Endothelial cell of umbilical vein (primary cell): ENCODE measurements at regions of chr14 and their contacts with region 1.

Region 1: DNA sequence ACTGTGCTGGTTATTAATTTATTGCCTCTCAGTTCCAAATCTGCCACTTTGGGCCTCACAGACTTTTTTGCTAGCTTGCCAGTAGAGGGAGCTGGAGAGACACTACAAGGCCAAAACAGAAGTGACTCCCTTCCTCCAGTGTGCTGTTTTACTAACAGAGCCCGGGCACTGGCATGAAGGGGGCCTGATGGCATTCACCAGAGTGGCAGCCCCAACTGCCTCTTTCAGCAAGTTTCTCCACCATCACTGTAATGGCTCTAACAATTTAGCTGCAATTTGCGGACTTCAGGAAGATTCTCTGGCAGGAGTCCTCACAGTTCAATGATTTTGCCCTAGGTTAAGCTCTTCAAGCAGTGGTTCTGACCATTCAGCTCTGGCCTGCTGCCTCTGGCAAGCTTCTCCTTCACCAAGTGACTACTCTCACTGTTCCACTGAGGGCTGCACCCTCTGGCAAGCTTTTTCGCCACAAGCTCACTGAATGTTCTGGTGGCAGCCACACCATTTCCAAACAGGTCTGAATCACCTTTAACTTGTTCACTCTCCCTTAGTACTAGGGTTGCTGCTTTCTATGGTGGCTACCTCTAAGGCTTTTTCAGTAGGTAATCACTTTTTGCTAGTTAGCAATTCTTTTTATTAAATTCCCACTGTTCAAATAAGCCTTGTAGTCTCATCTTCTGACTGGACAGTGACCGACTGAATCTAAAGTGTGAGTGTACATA is 104.9 kb downstream of the ZC3H14 start:
- DNase-seq: peak; percentile 64
- H3K4me3 ChIP-seq: no peak overlapping the region
- H3K27ac ChIP-seq: no peak overlapping the region
- H3K4me1 ChIP-seq: no peaks in the 10 kb centered on the region
- H3K27me3 ChIP-seq: peaks cover 0 to 3% of the 10 kb centered on the region in 2 experiments
- CTCF ChIP-seq: peak; percentile 79 to 84
- POLR2A ChIP-seq: no peak

Region 2: DNA sequence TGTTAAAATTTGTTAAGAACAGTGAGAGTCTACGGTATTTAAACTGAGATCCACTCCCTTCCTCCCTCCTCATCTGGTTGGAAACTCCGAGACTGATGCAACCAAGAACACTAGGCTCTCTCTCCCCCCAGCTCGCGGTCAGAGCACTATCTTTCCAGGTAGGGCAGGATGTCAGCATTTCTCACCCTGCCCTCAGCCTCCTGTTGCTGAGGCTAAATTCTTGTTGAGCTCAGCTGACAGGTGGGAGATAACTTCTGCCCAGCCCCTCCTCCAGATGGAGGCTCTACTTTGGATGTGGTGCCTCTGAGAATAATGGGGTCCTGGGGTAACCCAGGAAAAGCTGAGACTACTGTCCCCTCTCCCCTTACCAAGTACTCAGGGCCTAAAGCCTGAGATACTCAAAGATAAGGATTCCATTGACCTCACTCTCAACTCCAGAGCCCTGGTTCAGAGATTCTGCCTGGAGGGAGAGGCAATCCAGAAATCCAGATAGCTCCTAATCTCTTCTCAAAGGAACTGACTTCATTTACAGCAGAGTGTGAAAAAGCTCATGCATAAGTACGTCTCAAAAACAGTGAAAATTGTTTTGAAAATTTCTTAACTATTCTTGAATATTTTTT is 14.9 kb after region 1 on chr14:
- CTCF ChIA-PET with region 1: interaction called, 64 read pairs
- POLR2A ChIA-PET with region 1: no interaction called
- dilution Hi-C with region 1: no loop called
- intact Hi-C with region 1: no loop called
- DNase-seq: no peak
- H3K4me3 ChIP-seq: no peak overlapping the region
- H3K27ac ChIP-seq: no peak overlapping the region
- H3K4me1 ChIP-seq: no peaks in the 10 kb centered on the region
- H3K27me3 ChIP-seq: no peaks in the 10 kb centered on the region
- CTCF ChIP-seq: no peak
- POLR2A ChIP-seq: no peak

Region 3: GRCh38 chr14:88868558-88869159 is 200.9 kb after region 1 on chr14:
- CTCF ChIA-PET with region 1: interaction called, 24 read pairs
- POLR2A ChIA-PET with region 1: no interaction called
- dilution Hi-C with region 1: no loop called
- intact Hi-C with region 1: loop called (anchors 1 kb)
- DNase-seq: peak; percentile 32
- H3K4me3 ChIP-seq: no peak overlapping the region
- H3K27ac ChIP-seq: no peak overlapping the region
- H3K4me1 ChIP-seq: no peaks in the 10 kb centered on the region
- H3K27me3 ChIP-seq: no peaks in the 10 kb centered on the region
- CTCF ChIP-seq: no peak
- POLR2A ChIP-seq: no peak

Region 4: DNA sequence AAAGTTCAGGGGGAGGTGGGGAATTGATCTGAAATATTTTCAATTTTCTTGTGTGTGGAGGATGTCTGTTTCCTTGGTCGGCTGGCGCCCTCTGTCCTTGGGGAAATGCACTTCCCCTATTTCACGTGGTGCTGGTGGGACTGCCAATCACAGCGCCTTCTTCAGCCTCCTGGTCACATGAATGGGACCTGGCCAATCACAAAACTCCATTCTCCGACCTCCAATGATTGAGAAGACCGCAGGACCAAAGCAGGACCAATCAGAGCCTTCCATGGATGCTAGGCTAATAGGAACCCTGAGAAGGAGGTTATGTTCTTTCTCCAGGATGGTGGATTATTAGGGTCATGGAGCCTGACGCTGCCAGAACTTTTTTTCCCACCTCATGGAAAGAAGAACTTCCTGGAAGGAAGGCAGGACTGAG is 345.4 kb after region 1 on chr14:
- CTCF ChIA-PET with region 1: interaction called, 13 read pairs
- POLR2A ChIA-PET with region 1: no interaction called
- dilution Hi-C with region 1: no loop called
- intact Hi-C with region 1: loop called (anchors 1 kb)
- DNase-seq: peak; percentile 6
- H3K4me3 ChIP-seq: no peak overlapping the region
- H3K27ac ChIP-seq: no peak overlapping the region
- H3K4me1 ChIP-seq: no peaks in the 10 kb centered on the region
- H3K27me3 ChIP-seq: peaks cover 0 to 2% of the 10 kb centered on the region in 2 experiments
- CTCF ChIP-seq: peak in 1 of 2 donors; percentile 2
- POLR2A ChIP-seq: no peak

Region 5: DNA sequence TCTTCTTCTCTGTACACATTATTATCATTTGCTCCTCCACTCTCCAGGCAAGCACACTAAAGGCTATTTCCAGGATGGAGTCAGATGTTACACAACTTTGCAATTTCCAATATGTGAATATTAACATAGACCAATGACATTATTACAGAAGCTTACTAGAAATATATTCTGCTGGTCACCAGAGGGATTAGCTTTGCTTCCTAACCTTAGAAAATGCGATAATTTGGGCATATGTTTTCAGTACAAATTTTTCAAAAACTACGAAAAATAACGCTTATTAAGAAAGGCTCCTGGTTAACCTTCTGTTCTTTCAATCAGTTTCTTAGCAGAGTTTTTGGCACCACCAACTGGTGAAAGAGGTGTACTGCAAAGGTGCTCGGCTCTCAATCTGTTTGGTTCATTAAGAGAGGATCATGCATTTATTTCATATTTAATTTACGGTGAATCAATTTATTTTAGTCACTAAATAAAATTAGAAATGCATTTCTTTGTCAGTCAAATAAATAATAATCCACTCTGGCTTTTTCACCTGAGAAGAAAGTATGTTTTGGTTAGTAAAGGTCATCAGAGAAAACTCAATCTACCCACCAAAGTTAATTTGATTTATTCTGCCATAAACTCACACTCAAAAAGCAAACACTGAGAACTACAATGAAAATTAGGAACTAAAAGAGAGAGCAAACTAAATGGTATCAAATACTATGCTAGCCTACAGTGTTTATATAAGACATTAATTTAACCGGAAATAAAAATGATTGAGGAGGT is 1247.6 kb after region 1 on chr14:
- CTCF ChIA-PET with region 1: interaction called, 4 read pairs
- POLR2A ChIA-PET with region 1: no interaction called
- dilution Hi-C with region 1: no loop called
- intact Hi-C with region 1: loop called (anchors 10 kb)
- DNase-seq: peak; percentile 79
- H3K4me3 ChIP-seq: no peak overlapping the region
- H3K27ac ChIP-seq: no peak overlapping the region
- H3K4me1 ChIP-seq: no peaks in the 10 kb centered on the region
- H3K27me3 ChIP-seq: no peaks in the 10 kb centered on the region
- CTCF ChIP-seq: peak; percentile 75
- POLR2A ChIP-seq: no peak